Activated CD4-positive, alpha-beta memory T cell treated with anti-CD3 and anti-CD28 coated beads for 36 hours (primary cell): ENCODE measurements at regions of chr12 and their contacts with region 1.

Region 1: DNA sequence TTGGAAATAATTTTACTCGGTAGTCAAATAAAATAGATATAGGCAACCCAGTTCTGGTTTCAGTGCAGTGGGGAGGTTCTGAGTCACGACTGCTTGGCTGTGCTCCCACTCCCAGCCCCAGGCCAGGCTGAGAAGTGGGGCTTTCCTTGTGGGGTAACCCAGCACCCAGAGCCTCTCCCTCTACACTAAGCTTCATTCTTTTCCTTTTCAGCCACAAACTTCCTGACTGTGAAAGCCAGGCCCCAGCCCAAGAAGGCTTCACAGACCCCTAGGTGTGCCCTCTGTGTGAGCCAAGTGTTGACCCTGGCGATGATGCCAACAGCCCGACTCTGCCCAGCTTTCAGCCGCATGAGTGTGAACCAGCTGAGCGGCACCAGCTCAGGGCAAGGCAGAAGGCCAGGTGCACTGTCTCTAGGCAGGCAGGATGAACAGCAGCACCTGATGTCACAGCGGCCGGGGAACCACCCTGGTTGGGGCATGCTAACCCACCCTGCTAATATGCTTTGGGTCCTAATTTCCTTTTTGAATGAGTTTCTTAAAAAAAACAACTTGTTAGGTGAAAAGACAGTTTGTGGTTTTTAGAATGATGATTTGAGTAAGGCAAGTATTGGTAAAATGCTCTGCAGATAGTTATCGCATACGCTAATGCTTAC is 42.2 kb upstream of the ATP23 start:
- DNase-seq: peak; percentile 91
- H3K4me3 Mint-ChIP-seq: peak overlapping the region; percentile 66
- H3K27ac Mint-ChIP-seq: peak overlapping the region; percentile 94
- H3K4me1 Mint-ChIP-seq: peaks cover 54% of the 10 kb centered on the region
- H3K27me3 Mint-ChIP-seq: no peaks in the 10 kb centered on the region

Region 2: GRCh38 chr12:57693659-57694458 is 205.3 kb before region 1 on chr12 and contains the start of gene OS9:
- CTCF ChIA-PET with region 1: no interaction called
- POLR2A ChIA-PET with region 1: interaction called, 5 read pairs
- intact Hi-C with region 1: loop called (anchors 1 kb)
- DNase-seq: peak; percentile 97
- H3K4me3 Mint-ChIP-seq: no peak within 1 kb of the TSS
- H3K27ac Mint-ChIP-seq: no peak within 1 kb of the TSS
- H3K4me1 Mint-ChIP-seq: no peaks in the 10 kb centered on the region
- H3K27me3 Mint-ChIP-seq: peaks cover under 1% of the 10 kb centered on the region
- total RNA-seq, gene OS9: 73.4 to 74.8 TPM

Region 3: GRCh38 chr12:57782608-57783465 is 116.3 kb before region 1 on chr12 and contains the start of gene TSFM:
- CTCF ChIA-PET with region 1: interaction called, 14 read pairs
- POLR2A ChIA-PET with region 1: interaction called, 5 read pairs
- intact Hi-C with region 1: loop called (anchors 2 kb)
- DNase-seq: peak; percentile 98
- H3K4me3 Mint-ChIP-seq: peak within 1 kb of the TSS; percentile 100
- H3K27ac Mint-ChIP-seq: peak within 1 kb of the TSS; percentile 93
- H3K4me1 Mint-ChIP-seq: peaks cover 37% of the 10 kb centered on the region
- H3K27me3 Mint-ChIP-seq: no peaks in the 10 kb centered on the region
- total RNA-seq, gene TSFM: 45.5 to 47.2 TPM

Region 4: DNA sequence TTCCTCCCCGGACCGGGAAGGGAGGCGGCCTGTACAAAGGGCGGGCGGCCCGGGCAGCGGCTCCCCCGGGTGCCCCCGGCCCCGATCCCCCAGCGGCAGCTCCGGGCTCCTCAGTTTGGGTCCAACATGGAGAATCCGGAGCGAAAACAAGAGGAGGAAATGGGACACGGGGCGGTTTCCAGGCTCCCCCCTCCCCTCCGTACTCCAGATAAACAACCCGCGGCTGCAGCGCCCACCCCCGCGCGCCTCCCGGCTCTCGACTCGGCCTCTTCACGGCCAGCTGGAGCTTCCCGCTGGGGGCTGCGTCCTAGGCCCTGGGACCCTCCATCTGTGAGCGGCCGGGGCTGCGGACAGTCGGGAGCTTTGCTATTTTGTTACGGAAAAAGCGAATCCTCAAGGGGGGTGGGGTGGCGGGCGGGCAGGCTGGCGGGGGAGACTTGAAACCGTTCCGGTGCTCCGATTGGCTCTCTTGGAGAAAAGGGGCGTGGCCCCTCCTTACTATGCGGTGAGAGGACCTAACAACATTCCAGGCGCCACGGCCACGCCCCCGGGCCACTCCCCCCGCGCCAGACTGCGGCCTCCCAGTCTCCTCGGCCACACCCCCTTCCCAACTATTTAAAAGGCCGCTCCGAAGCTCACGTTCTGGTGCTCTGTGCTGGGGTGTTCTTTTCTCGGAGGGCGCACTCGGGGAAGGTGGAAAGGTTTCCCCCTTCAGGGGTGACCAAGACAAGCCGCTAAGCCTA is 52.4 kb before region 1 on chr12 and contains the start of gene CTDSP2:
- CTCF ChIA-PET with region 1: interaction called, 32 read pairs
- POLR2A ChIA-PET with region 1: interaction called, 22 read pairs
- intact Hi-C with region 1: loop called (anchors 1 kb)
- DNase-seq: peak; percentile 94
- H3K4me3 Mint-ChIP-seq: peak within 1 kb of the TSS; percentile 82
- H3K27ac Mint-ChIP-seq: peak within 1 kb of the TSS; percentile 78
- H3K4me1 Mint-ChIP-seq: peaks cover 37% of the 10 kb centered on the region
- H3K27me3 Mint-ChIP-seq: peaks cover 7% of the 10 kb centered on the region
- total RNA-seq, gene CTDSP2: 100 to 101 TPM

Region 5: DNA sequence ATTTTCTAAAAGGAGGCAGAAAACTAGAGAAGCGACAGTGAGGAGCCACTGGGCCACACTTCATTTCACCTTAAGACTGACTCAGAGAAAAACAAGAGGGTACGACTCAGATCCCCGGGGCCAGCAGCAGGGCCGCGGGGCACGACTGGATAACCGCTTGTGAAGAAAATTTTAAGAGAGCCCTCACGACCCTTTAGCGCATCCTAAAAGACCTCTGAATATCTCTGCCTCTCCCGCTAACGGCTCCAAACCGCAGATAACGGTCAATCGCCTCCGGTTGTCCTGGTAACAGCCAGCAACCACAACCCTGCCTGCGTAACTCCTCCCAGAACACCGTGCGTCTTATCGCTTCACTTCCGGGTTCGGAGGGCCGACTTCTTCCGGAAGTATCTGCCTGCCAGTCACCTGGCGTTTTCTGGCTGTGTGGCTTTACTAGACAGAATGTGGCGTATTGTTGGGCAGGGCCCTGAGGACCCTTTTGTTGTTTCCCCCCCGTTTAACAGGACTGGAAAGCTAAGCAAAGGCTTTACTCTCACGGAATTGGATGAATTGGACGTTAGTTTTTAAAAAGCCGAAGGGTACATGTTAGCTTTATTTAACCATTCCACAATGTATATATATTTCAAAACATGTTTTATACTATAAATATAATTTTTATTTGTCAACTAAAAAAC is 36.8 kb after region 1 on chr12:
- CTCF ChIA-PET with region 1: no interaction called
- POLR2A ChIA-PET with region 1: no interaction called
- intact Hi-C with region 1: loop called (anchors 1 kb)
- DNase-seq: peak; percentile 96
- H3K4me3 Mint-ChIP-seq: peak overlapping the region; percentile 97
- H3K27ac Mint-ChIP-seq: peak overlapping the region; percentile 97
- H3K4me1 Mint-ChIP-seq: peaks cover 25% of the 10 kb centered on the region
- H3K27me3 Mint-ChIP-seq: no peaks in the 10 kb centered on the region

Region 6: DNA sequence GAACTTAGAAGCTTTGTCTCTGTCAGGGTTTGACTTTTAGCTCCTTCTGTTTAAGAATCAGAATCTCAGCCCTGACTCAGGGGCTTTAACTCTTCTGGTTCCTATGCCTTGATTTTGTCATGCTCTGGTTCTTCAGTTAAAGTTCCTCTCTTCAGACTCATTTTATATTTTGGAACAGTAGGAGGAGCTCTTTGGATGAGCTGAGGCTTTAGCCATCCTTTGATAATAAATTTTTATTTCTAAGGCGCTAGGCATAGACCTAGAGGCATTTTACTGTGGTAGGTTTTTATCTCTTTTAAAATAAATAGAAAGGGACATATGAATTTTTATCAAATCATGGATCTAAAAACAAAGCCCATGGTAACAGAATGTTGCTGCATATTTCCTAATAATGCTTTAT is 93.9 kb after region 1 on chr12:
- CTCF ChIA-PET with region 1: no interaction called
- POLR2A ChIA-PET with region 1: no interaction called
- intact Hi-C with region 1: no loop called
- DNase-seq: no peak
- H3K4me3 Mint-ChIP-seq: no peak overlapping the region
- H3K27ac Mint-ChIP-seq: no peak overlapping the region
- H3K4me1 Mint-ChIP-seq: no peaks in the 10 kb centered on the region
- H3K27me3 Mint-ChIP-seq: peaks cover 5% of the 10 kb centered on the region

Region 7: GRCh38 chr12:58176296-58176869 is 277.2 kb after region 1 on chr12:
- CTCF ChIA-PET with region 1: no interaction called
- POLR2A ChIA-PET with region 1: no interaction called
- intact Hi-C with region 1: no loop called
- DNase-seq: no peak
- H3K4me3 Mint-ChIP-seq: no peak overlapping the region
- H3K27ac Mint-ChIP-seq: no peak overlapping the region
- H3K4me1 Mint-ChIP-seq: no peaks in the 10 kb centered on the region
- H3K27me3 Mint-ChIP-seq: peaks cover 18% of the 10 kb centered on the region